Mammary epithelial cell (primary cell): ENCODE measurements at regions of chr18 and their contacts with region 1.

Region 1: GRCh38 chr18:56661360-56662062 is 10.4 kb downstream of the WDR7 start:
- DNase-seq: no peak
- H3K4me3 ChIP-seq: no peak overlapping the region
- H3K27ac ChIP-seq: no peak overlapping the region
- H3K4me1 ChIP-seq: no peaks in the 10 kb centered on the region
- H3K27me3 ChIP-seq: no peaks in the 10 kb centered on the region
- CTCF ChIP-seq: no peak

Region 2: DNA sequence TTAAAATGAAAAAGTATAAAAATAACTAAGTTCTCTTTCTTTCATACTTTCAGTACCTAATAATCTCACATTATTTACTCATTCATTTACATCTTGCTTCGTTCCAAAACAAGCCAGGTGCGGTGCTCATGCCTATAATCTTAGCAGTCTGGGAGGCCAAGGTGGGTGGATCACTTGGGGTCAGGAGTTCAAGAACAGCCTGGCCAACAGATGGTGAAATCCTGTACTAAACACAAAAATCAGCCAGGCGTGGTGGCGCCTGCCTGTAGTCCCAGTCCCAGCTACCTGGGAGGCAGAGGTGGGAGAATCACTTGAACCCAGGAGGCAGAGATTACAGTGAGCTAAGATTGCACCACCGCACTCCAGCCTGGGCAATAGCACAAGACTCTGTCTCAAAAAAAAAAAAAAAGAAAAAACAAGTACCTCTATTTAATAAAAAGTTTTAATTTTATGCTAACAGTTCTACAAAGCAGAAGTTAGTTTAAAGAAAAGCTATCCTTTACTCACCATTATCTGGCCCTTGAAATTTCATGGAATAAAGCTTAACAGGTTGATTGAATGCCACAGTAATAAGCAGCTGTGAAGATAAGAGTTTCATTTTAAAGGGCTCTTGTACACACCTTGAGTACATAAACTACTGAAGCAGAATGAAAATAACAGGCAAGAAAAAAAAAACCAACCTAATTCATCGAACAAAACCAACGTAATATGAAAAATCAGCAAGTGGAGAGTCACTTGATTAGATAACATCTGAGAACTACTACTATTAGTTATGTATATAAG is 45.6 kb before region 1 on chr18:
- CTCF ChIA-PET with region 1: no interaction called
- dilution Hi-C with region 1: loop called (anchors 5 kb)
- in situ Hi-C with region 1: no loop called
- intact Hi-C with region 1: no loop called
- DNase-seq: no peak
- H3K4me3 ChIP-seq: no peak overlapping the region
- H3K27ac ChIP-seq: no peak overlapping the region
- H3K4me1 ChIP-seq: no peaks in the 10 kb centered on the region
- H3K27me3 ChIP-seq: no peaks in the 10 kb centered on the region
- CTCF ChIP-seq: no peak

Region 3: GRCh38 chr18:56696966-56697365 is 35.5 kb after region 1 on chr18:
- CTCF ChIA-PET with region 1: no interaction called
- dilution Hi-C with region 1: no loop called
- in situ Hi-C with region 1: no loop called
- intact Hi-C with region 1: no loop called
- DNase-seq: peak; percentile 38
- H3K4me3 ChIP-seq: no peak overlapping the region
- H3K27ac ChIP-seq: no peak overlapping the region
- H3K4me1 ChIP-seq: no peaks in the 10 kb centered on the region
- H3K27me3 ChIP-seq: no peaks in the 10 kb centered on the region
- CTCF ChIP-seq: no peak